Mammary epithelial cell (primary cell): ENCODE measurements at regions of chrX and their contacts with region 1.

Region 1: DNA sequence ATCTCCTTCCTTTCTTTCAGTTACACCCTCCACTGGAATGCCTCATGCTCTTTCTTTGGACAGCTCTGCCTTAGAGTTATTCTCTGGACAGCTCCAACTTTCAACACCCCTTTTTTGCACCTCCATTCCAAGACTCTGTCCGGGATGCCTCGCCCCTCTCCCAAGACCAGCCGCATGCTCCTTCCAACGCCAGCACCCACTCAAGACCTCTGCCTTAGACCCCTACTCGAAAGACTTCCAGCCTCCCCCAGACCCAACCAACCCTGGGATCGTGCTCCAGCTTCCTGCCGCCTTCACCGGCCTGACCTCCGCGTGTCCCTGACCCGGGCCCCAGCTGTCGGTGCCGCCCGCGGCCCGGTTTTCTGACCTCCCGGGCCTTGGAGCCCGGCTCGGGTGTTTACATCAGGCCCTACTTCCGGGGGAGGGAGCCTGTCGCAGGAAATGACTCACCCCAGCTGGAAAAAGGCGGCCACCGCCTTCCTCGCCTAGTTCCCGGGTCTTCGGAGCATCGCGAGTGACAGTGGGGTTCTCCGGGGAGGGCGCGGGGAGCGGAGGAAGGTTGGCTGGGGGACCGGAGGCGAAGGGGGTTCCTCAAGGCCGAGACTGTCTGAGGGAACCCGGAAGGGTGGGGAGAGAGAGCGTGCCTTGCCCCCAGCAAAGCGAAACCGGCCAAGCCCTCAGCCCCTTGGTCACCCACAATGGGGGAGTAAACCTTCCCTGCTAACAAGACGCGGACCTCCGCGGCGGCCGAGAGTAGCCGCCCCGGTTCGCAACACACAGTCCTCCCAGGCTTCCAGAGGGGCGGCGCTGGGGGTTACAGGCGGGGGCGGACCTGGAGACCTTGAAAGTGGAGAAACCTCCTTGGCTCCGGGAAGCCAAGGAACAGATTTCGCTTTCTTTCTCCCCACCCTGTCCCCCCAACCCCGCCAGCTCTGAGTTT is at the start of gene WDR45:
- DNase-seq: peak; percentile 58
- H3K4me3 ChIP-seq: peak within 1 kb of the TSS; percentile 56 to 70 (median 69)
- H3K27ac ChIP-seq: peak within 1 kb of the TSS; percentile 30
- H3K4me1 ChIP-seq: no peaks in the 10 kb centered on the region
- H3K27me3 ChIP-seq: no peaks in the 10 kb centered on the region
- CTCF ChIP-seq: no peak
- total RNA-seq, gene WDR45: 53.3 to 55.0 TPM

Region 2: DNA sequence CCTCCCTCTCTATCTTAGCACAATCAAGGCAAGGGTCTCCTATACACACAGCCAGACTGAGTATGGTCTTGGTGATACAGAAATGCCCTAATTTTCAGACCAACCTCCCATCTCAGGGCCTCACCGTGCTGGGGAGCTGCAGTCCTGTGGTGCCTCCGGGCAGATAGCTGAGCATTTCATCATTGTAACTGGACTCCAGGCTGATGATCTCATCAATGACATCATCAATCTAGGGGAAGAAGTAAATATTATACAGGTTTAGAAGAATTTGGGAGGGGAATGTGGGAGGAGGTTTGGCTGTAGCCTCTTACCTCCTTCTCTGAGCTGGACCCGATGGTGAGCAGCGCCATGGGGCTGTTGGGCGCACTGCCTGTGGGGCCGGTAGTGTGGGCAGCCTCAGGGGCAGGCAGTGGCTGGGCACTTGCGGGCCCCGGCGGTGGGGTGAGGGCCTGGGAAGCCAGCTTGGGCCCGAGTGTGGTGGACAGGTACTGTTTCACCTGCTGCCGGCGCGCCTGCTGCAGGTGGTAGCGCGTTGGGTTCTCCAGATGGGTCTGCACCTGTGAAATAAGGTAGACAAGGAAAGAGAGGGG is 41.8 kb before region 1 on chrX:
- CTCF ChIA-PET with region 1: interaction called, 18 read pairs
- dilution Hi-C with region 1: no loop called
- in situ Hi-C with region 1: no loop called
- intact Hi-C with region 1: loop called (anchors 2 kb)
- DNase-seq: no peak
- H3K4me3 ChIP-seq: no peak overlapping the region
- H3K27ac ChIP-seq: no peak overlapping the region
- H3K4me1 ChIP-seq: peaks cover 15% of the 10 kb centered on the region
- H3K27me3 ChIP-seq: no peaks in the 10 kb centered on the region
- CTCF ChIP-seq: no peak